Posterior vena cava (tissue), 2 donors: ENCODE measurements at regions of chr5 and their contacts with region 1.

Region 1: GRCh38 chr5:170294556-170294955 is 3.0 kb downstream of the LCP2 start:
- DNase-seq: no peak

Region 2: GRCh38 chr5:170067574-170068170 is 226.9 kb before region 1 on chr5:
- intact Hi-C with region 1: loop called in 1 of 2 experiments (anchors 2 kb)
- DNase-seq: no peak

Region 3: DNA sequence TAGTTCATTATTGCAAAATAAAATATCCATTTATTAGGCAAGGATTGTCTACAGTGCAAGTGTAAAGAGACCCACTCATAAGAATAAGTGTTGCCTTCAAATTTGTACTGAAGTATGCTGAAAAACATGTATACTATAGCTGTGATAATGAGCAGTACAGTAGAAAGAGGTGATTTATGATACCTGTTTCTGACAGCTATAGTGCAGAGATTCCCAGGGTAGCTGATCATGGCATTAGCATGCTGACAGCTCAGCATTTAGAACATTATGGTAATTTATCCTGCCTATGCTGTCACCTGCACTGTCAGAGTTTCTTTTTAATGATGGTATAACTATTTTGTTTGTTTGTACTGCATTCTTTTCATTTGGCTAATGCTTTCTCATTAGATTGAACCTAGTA is 836.9 kb after region 1 on chr5:
- intact Hi-C with region 1: no loop called
- DNase-seq: no peak